ENCODE measurements at regions of chr6 and their contacts with region 1.

Region 1: GRCh38 chr6:28863604-28864320 is 60.0 kb downstream of the TRIM27 start:
- H3K4me3 ChIP-seq: peak overlapping the region; percentile 77
- H3K27ac ChIP-seq: peak overlapping the region; percentile 60; the same call in 1 of the 2 replicates
- H3K4me1 ChIP-seq: no peaks in the 10 kb centered on the region
- CTCF ChIP-seq: peak; percentile 70

Region 2: DNA sequence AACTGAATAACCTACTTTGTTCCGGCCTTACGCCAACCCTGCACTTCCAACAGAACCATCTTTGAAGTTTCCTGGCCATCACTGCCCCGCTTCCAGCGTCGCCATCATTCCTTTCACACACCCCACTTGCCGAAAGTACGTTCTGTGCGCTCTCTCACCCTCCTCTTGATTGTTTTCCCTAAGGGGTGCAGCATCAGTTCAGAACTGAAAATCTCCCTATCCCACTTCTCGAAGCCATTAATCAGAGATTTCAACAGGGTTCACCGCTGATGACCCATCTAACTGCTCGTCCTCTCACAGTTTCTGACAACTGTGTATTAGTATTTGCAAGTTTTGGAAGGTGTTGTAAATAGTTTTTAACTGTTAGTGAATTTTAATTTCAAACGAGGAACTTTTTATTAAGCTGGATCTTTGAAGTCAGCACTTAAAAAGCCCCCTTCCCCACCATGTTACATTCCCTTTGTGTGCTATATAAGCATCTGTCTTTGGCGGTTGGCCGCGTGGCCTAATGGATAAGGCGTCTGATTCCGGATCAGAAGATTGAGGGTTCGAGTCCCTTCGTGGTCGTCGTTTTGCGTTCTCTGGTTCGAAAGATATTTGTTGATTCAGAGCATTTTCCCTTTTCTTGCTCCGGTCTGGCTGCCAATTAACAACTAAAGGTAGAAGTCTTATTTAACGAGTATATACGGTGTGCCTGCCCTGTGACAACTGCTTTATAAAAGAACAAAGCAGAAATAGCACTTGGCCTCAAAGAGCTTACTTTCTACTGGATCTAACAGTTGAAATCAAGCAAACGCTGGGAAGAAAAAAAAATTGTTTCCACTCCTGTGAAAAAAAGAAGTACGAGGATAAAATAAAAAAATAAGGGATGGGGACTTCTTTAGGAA is 17.4 kb after region 1 on chr6:
- CTCF ChIA-PET with region 1: interaction called, 4 read pairs
- POLR2A ChIA-PET with region 1: interaction called, 13 read pairs
- H3K4me3 ChIP-seq: peak overlapping the region; percentile 56
- H3K27ac ChIP-seq: peak overlapping the region; percentile 28; the same call in 1 of the 2 replicates
- H3K4me1 ChIP-seq: no peaks in the 10 kb centered on the region
- CTCF ChIP-seq: no peak

Region 3: GRCh38 chr6:28907394-28907793 is 43.6 kb after region 1 on chr6:
- CTCF ChIA-PET with region 1: no interaction called
- POLR2A ChIA-PET with region 1: no interaction called
- H3K4me3 ChIP-seq: no peak overlapping the region
- H3K27ac ChIP-seq: no peak overlapping the region
- H3K4me1 ChIP-seq: no peaks in the 10 kb centered on the region
- CTCF ChIP-seq: no peak